ENCODE measurements at regions of chr4 and their contacts with region 1.

Region 1: GRCh38 chr4:9762823-9763475 is 18.5 kb upstream of the DRD5 start:
- DNase-seq: peak; percentile 10 to 21
- ATAC-seq: no peak
- H3K4me3 ChIP-seq: no peak overlapping the region
- H3K27ac ChIP-seq: no peak overlapping the region
- H3K4me1 ChIP-seq: no peaks in the 10 kb centered on the region
- H3K27me3 ChIP-seq: peaks cover 0 to 6% (median 0%) of the 10 kb centered on the region in 3 donors
- CTCF ChIP-seq: peak; percentile 26 to 61 (median 58)
- POLR2A ChIP-seq: no peak

Region 2: DNA sequence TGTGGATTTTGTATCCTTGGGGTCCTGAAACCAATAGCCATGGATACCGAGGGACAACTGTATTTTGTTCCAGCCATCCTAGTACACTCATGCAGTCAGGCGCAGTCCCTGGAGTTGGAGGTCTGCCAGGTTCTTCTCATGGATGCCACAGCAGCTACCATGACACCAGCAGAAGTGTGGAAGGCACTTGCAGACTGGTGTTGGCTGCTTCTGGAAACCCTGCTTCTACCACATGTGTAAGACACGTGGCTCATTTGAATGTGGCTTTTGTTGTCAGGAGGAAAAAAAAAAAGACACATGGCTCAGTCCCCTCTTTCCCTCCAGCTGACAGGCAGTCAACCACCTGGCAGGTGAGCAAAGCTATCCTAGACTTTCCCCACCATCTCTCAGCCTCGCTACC is 37.9 kb after region 1 on chr4:
- in situ Hi-C with region 1: no loop called
- intact Hi-C with region 1: no loop called
- DNase-seq: no peak
- ATAC-seq: no peak
- H3K4me3 ChIP-seq: no peak overlapping the region
- H3K27ac ChIP-seq: no peak overlapping the region
- H3K4me1 ChIP-seq: no peaks in the 10 kb centered on the region
- H3K27me3 ChIP-seq: peaks cover 0 to 2% (median 0%) of the 10 kb centered on the region in 3 donors
- CTCF ChIP-seq: no peak
- POLR2A ChIP-seq: no peak

Region 3: DNA sequence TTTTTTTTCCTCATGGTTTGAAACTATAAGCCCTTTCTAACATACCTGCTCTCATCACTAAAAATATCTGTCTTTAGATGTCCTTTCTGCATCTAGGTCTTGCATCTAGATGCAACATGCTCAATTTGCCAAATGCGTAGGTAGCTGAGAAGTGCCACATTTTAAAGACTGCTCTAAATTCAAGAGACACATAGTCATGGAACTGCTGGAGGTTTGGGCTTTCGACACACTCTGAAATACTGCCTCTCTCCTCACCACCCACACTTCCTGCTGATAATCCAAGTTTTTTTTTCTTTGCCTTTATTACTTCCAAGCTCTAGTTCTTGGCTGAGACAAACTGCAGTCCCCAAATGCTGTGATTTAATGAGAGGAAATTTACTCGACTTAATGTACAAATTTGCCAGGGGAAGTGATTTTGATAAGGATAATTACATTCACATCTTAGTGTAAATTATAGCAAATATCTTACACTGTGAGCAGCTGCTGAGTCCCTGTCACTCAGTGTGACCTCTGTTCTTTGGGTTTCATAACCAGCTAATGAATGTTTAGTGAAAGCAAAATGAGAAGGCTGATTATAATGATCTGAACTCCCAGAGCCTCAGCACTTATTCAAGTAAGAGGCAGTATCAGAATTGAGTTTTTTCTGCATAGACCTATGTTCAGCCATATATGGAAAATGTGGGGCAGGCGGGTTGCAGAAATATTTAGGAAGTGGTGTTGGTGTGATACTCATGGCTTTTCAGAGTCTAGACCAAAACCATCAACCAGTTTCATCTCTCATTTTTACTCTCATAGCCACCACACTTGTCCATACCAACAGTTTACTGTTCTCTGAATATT is 49.8 kb after region 1 on chr4:
- in situ Hi-C with region 1: no loop called
- intact Hi-C with region 1: no loop called
- DNase-seq: no peak
- ATAC-seq: no peak
- H3K4me3 ChIP-seq: no peak overlapping the region
- H3K27ac ChIP-seq: no peak overlapping the region
- H3K4me1 ChIP-seq: no peaks in the 10 kb centered on the region
- H3K27me3 ChIP-seq: no peaks in the 10 kb centered on the region
- CTCF ChIP-seq: no peak
- POLR2A ChIP-seq: no peak

Region 4: GRCh38 chr4:10063544-10064300 is 300.8 kb after region 1 on chr4:
- in situ Hi-C with region 1: no loop called
- intact Hi-C with region 1: loop called (anchors 2 kb)
- DNase-seq: peak; percentile 41 to 70
- ATAC-seq: peak; percentile 91 to 96
- H3K4me3 ChIP-seq: no peak overlapping the region
- H3K27ac ChIP-seq: peak overlapping the region; percentile 1 to 55 (median 27)
- H3K4me1 ChIP-seq: peaks cover 0 to 4% of the 10 kb centered on the region in 2 donors
- H3K27me3 ChIP-seq: no peaks in the 10 kb centered on the region
- CTCF ChIP-seq: peak; percentile 46 to 72 (median 64)
- POLR2A ChIP-seq: no peak